Naive thymus-derived CD4-positive, alpha-beta T cell (primary cell): ENCODE measurements at regions of chr15 and their contacts with region 1.

Region 1: DNA sequence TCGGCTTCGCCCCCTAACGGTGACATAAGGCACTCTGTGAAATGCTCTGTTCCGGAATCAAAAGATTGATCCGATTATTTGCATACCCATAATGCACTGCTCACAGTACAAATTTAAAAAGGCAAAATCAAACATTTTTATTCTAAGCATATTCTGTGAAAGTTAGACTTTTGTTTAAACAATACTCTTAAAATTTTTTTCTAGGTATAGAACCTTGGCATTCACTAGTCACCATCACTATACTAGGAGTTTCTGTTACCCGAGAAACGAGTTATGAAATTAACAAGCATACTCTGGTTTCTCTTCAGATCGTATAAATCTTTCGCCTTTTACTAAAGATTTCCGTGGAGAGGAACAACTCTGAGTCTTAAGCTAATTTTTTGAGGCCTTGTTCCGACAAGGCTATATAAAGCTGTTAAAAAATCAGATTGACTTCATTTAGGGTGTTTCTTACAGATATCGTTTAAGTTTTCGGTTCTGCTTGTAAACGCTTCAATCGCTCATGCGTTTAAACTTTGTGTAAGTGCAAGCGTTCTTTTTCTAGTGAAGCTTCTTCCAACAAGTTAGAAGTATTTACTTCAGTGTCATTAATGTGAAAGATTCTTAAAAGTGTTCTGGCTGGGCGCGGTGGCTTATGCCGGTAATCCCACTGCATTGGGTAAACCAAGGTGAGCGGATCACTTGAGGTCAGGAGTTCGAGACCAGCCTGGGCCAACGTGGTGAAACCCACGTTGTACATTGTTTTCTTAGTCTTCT is at the start of gene RNU5B-1:
- DNase-seq: peak; percentile 40 to 94 (median 88)
- ATAC-seq: peak; percentile 89
- H3K4me3 ChIP-seq: peak within 1 kb of the TSS; percentile 60
- H3K4me3 Mint-ChIP-seq: peak within 1 kb of the TSS; percentile 91 to 99 (median 97)
- H3K27ac ChIP-seq: peak within 1 kb of the TSS; percentile 83
- H3K27ac Mint-ChIP-seq: peak within 1 kb of the TSS; percentile 96 to 100 (median 99)
- H3K4me1 ChIP-seq: peaks cover 0 to 9% of the 10 kb centered on the region in 2 donors
- H3K4me1 Mint-ChIP-seq: peaks cover 4 to 35% (median 31%) of the 10 kb centered on the region in 7 donors
- H3K27me3 ChIP-seq: no peaks in the 10 kb centered on the region
- H3K27me3 Mint-ChIP-seq: peaks cover 0 to 11% (median 0%) of the 10 kb centered on the region in 5 donors
- total RNA-seq, gene RNU5B-1: 18.9 TPM in 1 of 5 experiments, not detected in the others

Region 2: GRCh38 chr15:64387562-64388168 is 916.9 kb before region 1 on chr15 and contains the start of gene TRIP4:
- CTCF ChIA-PET with region 1: no interaction called
- POLR2A ChIA-PET with region 1: no interaction called
- intact Hi-C with region 1: loop called in 1 of 2 experiments (anchors 10 kb)
- DNase-seq: peak; percentile 90 to 97 (median 96)
- ATAC-seq: peak; percentile 100
- H3K4me3 ChIP-seq: peak within 1 kb of the TSS; percentile 97
- H3K4me3 Mint-ChIP-seq: peak within 1 kb of the TSS; percentile 95 to 99 (median 97)
- H3K27ac ChIP-seq: peak within 1 kb of the TSS; percentile 64
- H3K27ac Mint-ChIP-seq: peak within 1 kb of the TSS; percentile 84 to 99 (median 92)
- H3K4me1 ChIP-seq: peaks cover 8 to 10% of the 10 kb centered on the region in 2 donors
- H3K4me1 Mint-ChIP-seq: peaks cover 17 to 24% (median 19%) of the 10 kb centered on the region in 7 donors
- H3K27me3 ChIP-seq: no peaks in the 10 kb centered on the region
- H3K27me3 Mint-ChIP-seq: no peaks in the 10 kb centered on the region
- total RNA-seq, gene TRIP4: 16.5 to 29.3 (median 25.4) TPM

Region 3: GRCh38 chr15:65054333-65055200 is 250.0 kb before region 1 on chr15:
- CTCF ChIA-PET with region 1: no interaction called
- POLR2A ChIA-PET with region 1: no interaction called
- intact Hi-C with region 1: loop called (anchors 1 to 2 kb)
- DNase-seq: peak; percentile 21 to 58 (median 45)
- ATAC-seq: peak; percentile 50
- H3K4me3 ChIP-seq: no peak overlapping the region
- H3K4me3 Mint-ChIP-seq: no peak overlapping the region
- H3K27ac ChIP-seq: no peak overlapping the region
- H3K27ac Mint-ChIP-seq: no peak overlapping the region
- H3K4me1 ChIP-seq: peaks cover 0 to 4% of the 10 kb centered on the region in 2 donors
- H3K4me1 Mint-ChIP-seq: peaks cover 0 to 16% (median 9%) of the 10 kb centered on the region in 7 donors
- H3K27me3 ChIP-seq: no peaks in the 10 kb centered on the region
- H3K27me3 Mint-ChIP-seq: peaks cover 0 to 3% (median 0%) of the 10 kb centered on the region in 5 donors

Region 4: GRCh38 chr15:65286704-65287519 is 17.7 kb before region 1 on chr15 and contains the start of gene PARP16:
- CTCF ChIA-PET with region 1: interaction called, 7 read pairs
- POLR2A ChIA-PET with region 1: interaction called, 52 read pairs
- intact Hi-C with region 1: loop called (anchors 1 kb)
- DNase-seq: peak; percentile 85 to 95 (median 87)
- ATAC-seq: peak; percentile 97
- H3K4me3 ChIP-seq: peak within 1 kb of the TSS; percentile 68
- H3K4me3 Mint-ChIP-seq: peak within 1 kb of the TSS; percentile 70 to 92 (median 90)
- H3K27ac ChIP-seq: peak within 1 kb of the TSS; percentile 87
- H3K27ac Mint-ChIP-seq: peak within 1 kb of the TSS; percentile 76 to 94 (median 87)
- H3K4me1 ChIP-seq: peaks cover 15 to 18% of the 10 kb centered on the region in 2 donors
- H3K4me1 Mint-ChIP-seq: peaks cover 30 to 60% (median 41%) of the 10 kb centered on the region in 7 donors
- H3K27me3 ChIP-seq: no peaks in the 10 kb centered on the region
- H3K27me3 Mint-ChIP-seq: no peaks in the 10 kb centered on the region
- total RNA-seq, gene PARP16: 10.9 to 21.5 (median 15.7) TPM

Region 5: GRCh38 chr15:65792130-65792987 is 487.8 kb after region 1 on chr15 and contains the start of gene DENND4A:
- CTCF ChIA-PET with region 1: no interaction called
- POLR2A ChIA-PET with region 1: no interaction called
- intact Hi-C with region 1: loop called in 1 of 2 experiments (anchors 10 kb)
- DNase-seq: peak; percentile 95 to 99 (median 98)
- ATAC-seq: peak; percentile 91
- H3K4me3 ChIP-seq: peak within 1 kb of the TSS; percentile 91
- H3K4me3 Mint-ChIP-seq: peak within 1 kb of the TSS; percentile 89 to 99 (median 93)
- H3K27ac ChIP-seq: peak within 1 kb of the TSS; percentile 99
- H3K27ac Mint-ChIP-seq: peak within 1 kb of the TSS; percentile 94 to 100 (median 98)
- H3K4me1 ChIP-seq: peaks cover 24 to 33% of the 10 kb centered on the region in 2 donors
- H3K4me1 Mint-ChIP-seq: peaks cover 18 to 66% (median 49%) of the 10 kb centered on the region in 7 donors
- H3K27me3 ChIP-seq: no peaks in the 10 kb centered on the region
- H3K27me3 Mint-ChIP-seq: no peaks in the 10 kb centered on the region
- total RNA-seq, gene DENND4A: 40.0 to 67.9 (median 64.6) TPM

Region 6: DNA sequence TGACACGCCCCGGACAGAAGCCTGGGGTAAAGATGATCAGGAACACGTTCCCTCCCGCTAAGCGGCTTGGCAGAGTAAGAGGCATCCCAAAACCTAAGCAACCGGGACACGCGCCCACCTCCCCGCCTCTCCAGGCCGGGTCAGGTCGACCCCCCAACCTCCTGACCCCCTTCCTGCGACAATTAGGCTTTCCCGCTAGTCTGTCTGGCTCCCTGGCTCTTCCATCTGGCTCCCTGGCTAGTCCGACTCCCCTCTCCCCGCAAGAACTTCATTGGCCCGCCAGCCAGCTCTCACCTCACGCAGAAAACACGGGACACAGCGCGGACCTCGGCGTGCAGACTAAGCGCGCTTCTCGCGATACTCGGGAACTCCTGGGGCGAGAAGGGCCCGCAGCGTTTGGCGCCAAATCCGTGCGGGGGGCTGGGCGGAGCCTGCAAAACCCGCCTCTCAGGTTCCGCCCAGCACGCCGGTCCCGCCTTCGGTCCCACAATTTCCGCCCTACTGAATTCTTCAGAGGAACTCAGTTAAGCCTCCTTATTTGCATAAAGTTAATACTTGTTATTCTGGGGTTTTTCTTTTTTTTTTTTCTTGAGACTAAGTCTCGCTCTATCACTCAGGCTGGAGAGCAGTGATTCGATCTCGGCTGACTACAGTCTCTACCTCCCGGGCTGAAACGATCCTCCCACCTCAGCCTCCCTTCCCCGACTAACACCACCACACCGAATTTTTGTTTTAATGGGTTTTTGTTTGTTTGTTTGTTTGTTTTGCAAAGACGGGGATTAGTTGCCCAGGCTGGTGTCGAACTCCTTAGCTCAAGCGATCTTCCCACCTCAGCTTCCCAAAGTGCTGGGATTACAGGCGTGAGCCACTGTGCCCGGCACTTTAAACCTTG is 1052.0 kb after region 1 on chr15 and contains the start of gene TIPIN:
- CTCF ChIA-PET with region 1: no interaction called
- POLR2A ChIA-PET with region 1: no interaction called
- intact Hi-C with region 1: loop called in 1 of 2 experiments (anchors 1 kb)
- DNase-seq: peak; percentile 90 to 96 (median 95)
- ATAC-seq: peak; percentile 99
- H3K4me3 ChIP-seq: peak within 1 kb of the TSS; percentile 92
- H3K4me3 Mint-ChIP-seq: peak within 1 kb of the TSS; percentile 92 to 100 (median 96)
- H3K27ac ChIP-seq: peak within 1 kb of the TSS; percentile 82
- H3K27ac Mint-ChIP-seq: peak within 1 kb of the TSS; percentile 90 to 98 (median 97)
- H3K4me1 ChIP-seq: peaks cover 4 to 6% of the 10 kb centered on the region in 2 donors
- H3K4me1 Mint-ChIP-seq: peaks cover 18 to 35% (median 26%) of the 10 kb centered on the region in 7 donors
- H3K27me3 ChIP-seq: no peaks in the 10 kb centered on the region
- H3K27me3 Mint-ChIP-seq: no peaks in the 10 kb centered on the region
- total RNA-seq, gene TIPIN: 3.8 to 28.2 (median 9.9) TPM